Transverse colon (tissue), 4 donors: ENCODE measurements at regions of chr6 and their contacts with region 1.

Region 1: DNA sequence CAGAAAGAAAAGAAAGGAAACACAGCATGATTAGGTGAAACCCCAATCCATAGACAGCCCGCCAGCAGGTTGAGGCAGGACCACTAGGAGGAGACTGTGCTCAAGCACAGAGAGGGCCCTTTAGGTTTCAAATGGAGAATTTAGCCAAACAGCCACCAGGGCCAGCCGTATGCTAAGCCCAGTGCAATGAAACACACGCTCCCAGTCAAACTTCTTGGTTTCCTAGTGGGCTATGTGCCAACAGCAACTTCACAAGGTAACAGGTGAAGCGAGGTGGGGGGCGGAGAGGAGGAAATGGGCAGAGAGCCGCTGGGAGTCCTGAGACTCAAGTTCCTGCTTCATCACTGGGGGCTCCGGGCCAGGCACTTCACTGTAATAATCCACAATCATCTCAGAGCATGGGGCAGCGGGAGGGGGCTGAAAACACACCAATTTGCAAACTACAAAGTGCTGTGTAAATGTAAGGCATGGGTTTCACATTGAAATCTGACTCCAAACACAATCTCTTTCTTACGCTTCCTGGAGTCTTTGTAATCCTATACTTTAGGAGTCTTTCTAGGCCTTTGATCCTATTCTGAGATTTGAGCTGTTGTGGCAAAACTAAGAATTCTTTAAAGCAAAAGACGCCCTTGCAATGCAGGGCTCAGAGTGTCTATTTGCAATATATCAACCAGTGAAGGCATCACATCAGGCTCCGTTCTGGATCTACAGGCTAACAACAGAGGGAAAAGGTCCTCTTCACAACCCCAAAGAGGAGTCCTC is 117.3 kb downstream of the OPRM1 start:
- DNase-seq: peak; percentile 47
- H3K4me3 ChIP-seq: no peak overlapping the region
- H3K27ac ChIP-seq: peak overlapping the region; percentile 6 to 42 (median 20)
- H3K4me1 ChIP-seq: peaks cover 0 to 17% (median 4%) of the 10 kb centered on the region in 4 donors
- H3K27me3 ChIP-seq: no peaks in the 10 kb centered on the region
- CTCF ChIP-seq: peak; percentile 38 to 66 (median 49)
- EP300 ChIP-seq: no peak
- POLR2A ChIP-seq: no peak

Region 2: GRCh38 chr6:154095571-154095970 is 60.7 kb before region 1 on chr6:
- in situ Hi-C with region 1: no loop called
- intact Hi-C with region 1: no loop called
- DNase-seq: no peak
- H3K4me3 ChIP-seq: no peak overlapping the region
- H3K27ac ChIP-seq: no peak overlapping the region
- H3K4me1 ChIP-seq: no peaks in the 10 kb centered on the region
- H3K27me3 ChIP-seq: no peaks in the 10 kb centered on the region
- CTCF ChIP-seq: no peak
- EP300 ChIP-seq: no peak
- POLR2A ChIP-seq: no peak

Region 3: GRCh38 chr6:154276810-154277628 is 120.7 kb after region 1 on chr6:
- in situ Hi-C with region 1: loop called (anchors 5 to 25 kb)
- intact Hi-C with region 1: loop called (anchors 10 kb)
- DNase-seq: no peak
- H3K4me3 ChIP-seq: no peak overlapping the region
- H3K27ac ChIP-seq: no peak overlapping the region
- H3K4me1 ChIP-seq: peaks cover 0 to 9% (median 0%) of the 10 kb centered on the region in 4 donors
- H3K27me3 ChIP-seq: no peaks in the 10 kb centered on the region
- CTCF ChIP-seq: peak; percentile 51 to 68 (median 62)
- EP300 ChIP-seq: no peak
- POLR2A ChIP-seq: no peak

Region 4: GRCh38 chr6:154370545-154370944 is 214.2 kb after region 1 on chr6:
- in situ Hi-C with region 1: loop called in 1 of 4 experiments (anchors 25 kb)
- intact Hi-C with region 1: no loop called
- DNase-seq: peak; percentile 14
- H3K4me3 ChIP-seq: no peak overlapping the region
- H3K27ac ChIP-seq: no peak overlapping the region
- H3K4me1 ChIP-seq: peaks cover 0 to 5% (median 0%) of the 10 kb centered on the region in 4 donors
- H3K27me3 ChIP-seq: no peaks in the 10 kb centered on the region
- CTCF ChIP-seq: peak in 3 of 5 experiments; percentile 13 to 34 (median 26)
- EP300 ChIP-seq: no peak
- POLR2A ChIP-seq: no peak

Region 5: GRCh38 chr6:154408891-154409500 is 252.7 kb after region 1 on chr6:
- in situ Hi-C with region 1: no loop called
- intact Hi-C with region 1: loop called (anchors 10 kb)
- DNase-seq: peak; percentile 18
- H3K4me3 ChIP-seq: no peak overlapping the region
- H3K27ac ChIP-seq: peak overlapping the region; percentile 71 to 84 (median 82)
- H3K4me1 ChIP-seq: peaks cover 7 to 29% (median 23%) of the 10 kb centered on the region in 4 donors
- H3K27me3 ChIP-seq: no peaks in the 10 kb centered on the region
- CTCF ChIP-seq: peak in 4 of 5 experiments; percentile 18 to 38 (median 24)
- EP300 ChIP-seq: no peak
- POLR2A ChIP-seq: no peak

Region 6: DNA sequence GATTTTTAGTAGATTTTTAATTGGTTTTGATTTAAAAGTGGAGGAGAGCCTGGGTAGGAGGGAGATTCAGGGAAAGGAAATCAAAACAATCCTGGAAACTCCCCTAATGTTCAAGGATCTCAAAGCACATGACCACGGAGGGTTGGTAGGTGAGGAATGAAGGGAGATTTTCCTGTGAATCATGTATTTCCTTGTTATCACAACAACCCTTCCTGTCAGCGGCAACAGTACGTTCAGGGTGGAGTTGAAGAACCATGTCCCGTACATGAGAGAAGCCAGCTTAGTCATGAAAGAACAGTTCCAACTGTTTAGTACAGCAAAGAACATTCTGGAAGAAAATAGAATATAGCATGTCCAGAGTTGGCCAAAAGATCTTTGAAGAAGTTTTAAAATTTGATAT is 497.5 kb after region 1 on chr6:
- in situ Hi-C with region 1: loop called in 1 of 4 experiments (anchors 25 kb)
- intact Hi-C with region 1: no loop called
- DNase-seq: no peak
- H3K4me3 ChIP-seq: no peak overlapping the region
- H3K27ac ChIP-seq: no peak overlapping the region
- H3K4me1 ChIP-seq: peaks cover 0 to 12% (median 0%) of the 10 kb centered on the region in 4 donors
- H3K27me3 ChIP-seq: no peaks in the 10 kb centered on the region
- CTCF ChIP-seq: no peak
- EP300 ChIP-seq: no peak
- POLR2A ChIP-seq: no peak

Region 7: DNA sequence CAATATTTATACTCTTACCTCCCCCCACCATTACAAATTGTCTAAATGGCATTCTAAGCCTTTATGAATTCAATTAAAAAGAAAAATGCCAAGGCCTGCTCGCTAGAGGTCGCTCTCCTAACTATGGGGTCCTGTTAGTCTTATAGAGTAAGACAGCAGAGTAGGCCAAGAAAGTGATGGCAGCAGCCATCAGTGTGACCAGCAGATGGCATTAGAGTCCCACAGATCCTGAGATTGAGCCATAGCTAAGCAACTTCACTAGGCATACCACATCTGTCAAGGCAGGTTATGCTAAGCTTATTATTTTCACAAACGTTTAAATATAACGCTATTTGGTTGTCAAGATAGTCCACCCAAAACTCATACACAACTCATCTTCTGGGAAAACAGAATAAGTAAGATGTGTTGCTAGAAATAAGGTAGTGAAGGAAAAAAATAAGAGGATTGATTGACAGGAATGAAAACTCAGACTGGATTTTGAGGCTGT is 519.3 kb after region 1 on chr6:
- in situ Hi-C with region 1: loop called in 1 of 4 experiments (anchors 25 kb)
- intact Hi-C with region 1: loop called (anchors 10 kb)
- DNase-seq: peak; percentile 91
- H3K4me3 ChIP-seq: no peak overlapping the region
- H3K27ac ChIP-seq: no peak overlapping the region
- H3K4me1 ChIP-seq: no peaks in the 10 kb centered on the region
- H3K27me3 ChIP-seq: no peaks in the 10 kb centered on the region
- CTCF ChIP-seq: peak; percentile 97 to 99 (median 98)
- EP300 ChIP-seq: no peak
- POLR2A ChIP-seq: no peak